HCT116 (cell line): ENCODE measurements at regions of chr15 and their contacts with region 1.

Region 1: GRCh38 chr15:84734794-84735479 is 13.5 kb upstream of the ZNF592 start:
- DNase-seq: peak; percentile 85
- ATAC-seq: peak; percentile 87
- H3K4me3 ChIP-seq: peak overlapping the region; percentile 32 to 55
- H3K27ac ChIP-seq: peak overlapping the region; percentile 77
- H3K4me1 ChIP-seq: peaks cover 40 to 55% of the 10 kb centered on the region in 2 experiments
- H3K27me3 ChIP-seq: no peaks in the 10 kb centered on the region
- CTCF ChIP-seq: no peak
- POLR2A ChIP-seq: peak; percentile 42
- RAD21 ChIP-seq: peak; percentile 30; the same call in 1 of the 2 replicates

Region 2: GRCh38 chr15:84716036-84716799 is 18.7 kb before region 1 on chr15 and contains the start of gene SEC11A:
- CTCF ChIA-PET with region 1: no interaction called
- POLR2A ChIA-PET with region 1: interaction called, 38 read pairs
- RAD21 ChIA-PET with region 1: interaction called in 1 of 2 experiments, 5 read pairs
- intact Hi-C with region 1: loop called (anchors 1 kb)
- DNase-seq: peak; percentile 92
- ATAC-seq: peak; percentile 97
- H3K4me3 ChIP-seq: peak within 1 kb of the TSS; percentile 95 to 99
- H3K27ac ChIP-seq: peak within 1 kb of the TSS; percentile 97
- H3K4me1 ChIP-seq: peaks cover 8 to 24% of the 10 kb centered on the region in 2 experiments; a peak in 3 of 4 replicates
- H3K27me3 ChIP-seq: no peaks in the 10 kb centered on the region
- CTCF ChIP-seq: no peak
- POLR2A ChIP-seq: peak; percentile 96
- RAD21 ChIP-seq: no peak
- total RNA-seq, gene SEC11A: 175 TPM